Activated naive CD4-positive, alpha-beta T cell treated with anti-CD3 and anti-CD28 coated beads for 36 hours (primary cell): ENCODE measurements at regions of chr17 and their contacts with region 1.

Region 1: DNA sequence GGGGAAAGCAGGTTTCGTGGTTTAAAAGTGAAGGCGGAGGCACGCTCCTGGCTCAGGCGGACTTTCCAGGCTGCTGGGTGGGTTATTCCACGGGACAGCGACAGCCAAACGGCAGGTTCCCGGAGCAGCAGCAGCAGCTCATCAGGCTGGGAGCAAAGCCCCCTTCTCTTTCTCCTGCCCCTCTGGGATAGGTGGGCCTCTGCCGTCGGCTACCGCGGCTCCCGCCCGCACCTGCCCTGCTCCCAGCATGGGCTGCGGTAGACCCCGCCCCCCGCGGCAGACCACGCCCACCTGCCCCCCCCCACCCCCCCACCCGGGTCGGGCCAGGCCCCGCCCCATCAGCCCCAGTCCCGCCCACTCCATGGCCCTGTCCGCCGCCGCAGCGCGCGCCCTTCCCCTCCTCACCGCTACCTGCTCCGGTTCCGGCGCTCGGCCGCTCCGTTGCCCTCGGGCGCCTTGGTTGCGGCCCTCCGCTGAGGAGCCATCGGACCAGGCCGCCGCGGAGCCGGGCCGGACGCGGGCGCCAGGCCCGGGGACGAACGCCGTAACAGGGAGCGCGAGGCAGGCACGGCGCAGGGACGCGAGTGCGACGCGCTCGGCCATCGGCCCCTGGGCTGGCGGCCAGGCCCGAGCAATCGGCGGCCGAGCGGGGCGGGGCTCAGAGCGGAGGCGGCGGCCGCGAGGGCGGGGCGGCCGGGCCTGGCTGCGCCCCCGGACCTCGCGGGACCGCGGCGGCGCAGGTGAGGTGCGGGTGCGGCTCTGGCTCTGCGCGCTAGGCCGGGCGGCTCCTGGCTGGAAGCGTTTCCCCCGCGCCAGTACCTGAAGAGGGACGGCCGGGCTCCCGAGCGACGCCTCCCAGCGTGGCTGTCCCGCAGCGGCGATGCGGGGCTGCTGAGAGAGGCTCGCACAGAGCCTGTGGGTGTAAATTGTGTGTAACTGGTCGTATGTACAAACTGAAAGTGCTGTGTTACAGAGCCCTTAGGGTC is at the starts of genes HEXD and OGFOD3:
- DNase-seq: peak; percentile 80
- H3K4me3 Mint-ChIP-seq: peak within 1 kb of the TSS; percentile 75
- H3K27ac Mint-ChIP-seq: peak within 1 kb of the TSS; percentile 30
- H3K4me1 Mint-ChIP-seq: peaks cover 31% of the 10 kb centered on the region
- H3K27me3 Mint-ChIP-seq: no peaks in the 10 kb centered on the region
- total RNA-seq, gene HEXD: 22.4 to 26.3 TPM
- total RNA-seq, gene OGFOD3: 31.1 to 32.9 TPM

Region 2: DNA sequence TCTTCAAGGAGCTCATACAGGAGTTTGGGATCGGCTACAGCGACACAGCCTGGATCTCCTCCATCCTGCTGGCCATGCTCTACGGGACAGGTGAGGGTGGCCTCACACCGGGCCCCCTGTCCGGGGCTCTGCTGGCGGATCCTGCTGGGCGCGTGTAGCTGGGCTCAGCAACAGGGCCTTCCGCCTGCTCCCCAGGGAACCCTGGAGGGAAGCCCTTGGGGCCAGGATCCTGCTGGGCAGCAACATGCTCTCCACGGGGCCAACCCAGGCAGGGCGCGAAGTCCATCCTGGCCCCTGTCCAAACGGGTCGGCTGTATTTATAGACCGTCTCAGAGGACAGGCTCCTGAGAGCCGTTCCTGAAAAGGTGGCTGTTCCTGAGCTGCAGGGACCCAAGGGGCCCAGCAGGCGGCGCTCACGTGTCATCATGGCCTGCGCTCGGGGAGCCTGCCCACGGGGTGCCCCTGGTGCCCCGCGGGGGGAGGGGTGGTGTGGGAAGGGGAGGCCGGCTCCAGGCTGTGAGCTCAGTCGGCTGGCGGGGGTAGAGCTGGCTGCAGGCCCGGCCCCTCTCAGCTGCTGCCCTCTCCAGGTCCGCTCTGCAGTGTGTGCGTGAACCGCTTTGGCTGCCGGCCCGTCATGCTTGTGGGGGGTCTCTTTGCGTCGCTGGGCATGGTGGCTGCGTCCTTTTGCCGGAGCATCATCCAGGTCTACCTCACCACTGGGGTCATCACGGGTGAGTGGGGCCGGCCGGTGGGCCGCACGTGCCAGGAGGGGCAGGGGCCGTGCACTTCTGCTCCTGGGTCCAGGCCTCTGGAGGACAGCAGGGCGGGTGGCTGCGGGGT is 181.9 kb before region 1 on chr17:
- CTCF ChIA-PET with region 1: interaction called, 5 read pairs
- intact Hi-C with region 1: loop called (anchors 2 kb)
- DNase-seq: peak; percentile 78
- H3K4me3 Mint-ChIP-seq: no peak overlapping the region
- H3K27ac Mint-ChIP-seq: no peak overlapping the region
- H3K4me1 Mint-ChIP-seq: peaks cover 30% of the 10 kb centered on the region
- H3K27me3 Mint-ChIP-seq: no peaks in the 10 kb centered on the region

Region 3: GRCh38 chr17:82351716-82352488 is 66.4 kb before region 1 on chr17:
- CTCF ChIA-PET with region 1: interaction called, 19 read pairs
- intact Hi-C with region 1: loop called (anchors 1 kb)
- DNase-seq: peak; percentile 89
- H3K4me3 Mint-ChIP-seq: no peak overlapping the region
- H3K27ac Mint-ChIP-seq: no peak overlapping the region
- H3K4me1 Mint-ChIP-seq: no peaks in the 10 kb centered on the region
- H3K27me3 Mint-ChIP-seq: no peaks in the 10 kb centered on the region

Region 4: GRCh38 chr17:82457997-82458864 is 39.9 kb after region 1 on chr17 and contains the start of gene NARF:
- CTCF ChIA-PET with region 1: no interaction called
- intact Hi-C with region 1: loop called (anchors 1 kb)
- DNase-seq: peak; percentile 97
- H3K4me3 Mint-ChIP-seq: peak within 1 kb of the TSS; percentile 78
- H3K27ac Mint-ChIP-seq: peak within 1 kb of the TSS; percentile 97
- H3K4me1 Mint-ChIP-seq: peaks cover 27% of the 10 kb centered on the region
- H3K27me3 Mint-ChIP-seq: no peaks in the 10 kb centered on the region
- total RNA-seq, gene NARF: 64.2 to 69.3 TPM

Region 5: DNA sequence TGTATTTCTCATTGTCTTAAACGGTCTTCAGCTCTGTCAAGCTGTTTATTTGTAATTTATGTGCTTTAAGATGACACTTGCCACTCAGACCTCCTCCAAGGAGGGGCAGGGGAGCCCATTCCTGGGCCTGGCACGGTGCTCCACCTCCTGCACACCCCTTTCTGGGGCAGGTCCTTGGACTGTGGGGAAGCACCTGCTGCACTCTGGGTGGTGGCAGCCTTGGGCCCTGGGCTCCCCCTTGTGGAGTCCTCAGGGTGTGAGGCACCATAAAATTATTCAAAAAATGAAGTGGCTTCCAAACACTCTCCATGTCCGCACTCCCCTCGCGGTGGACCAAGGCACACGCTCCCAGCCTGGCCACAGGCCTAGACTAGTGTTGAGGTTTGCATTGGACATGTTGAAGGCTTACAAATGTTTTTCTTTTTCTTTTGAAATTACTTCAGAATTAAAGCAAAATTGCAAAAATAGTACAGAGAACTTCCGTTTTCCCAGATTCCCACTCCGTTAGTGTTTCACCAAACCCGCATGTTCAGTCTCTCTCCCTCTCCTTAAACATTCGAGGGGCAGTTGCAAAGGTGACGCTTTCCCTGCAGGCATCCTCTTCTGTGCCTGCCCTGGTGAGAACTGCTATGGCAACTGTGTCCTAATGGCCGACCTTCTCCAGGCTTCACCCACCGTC is 133.6 kb after region 1 on chr17:
- CTCF ChIA-PET with region 1: interaction called, 4 read pairs
- intact Hi-C with region 1: loop called (anchors 2 kb)
- DNase-seq: peak; percentile 90
- H3K4me3 Mint-ChIP-seq: no peak overlapping the region
- H3K27ac Mint-ChIP-seq: peak overlapping the region; percentile 54
- H3K4me1 Mint-ChIP-seq: peaks cover 32% of the 10 kb centered on the region
- H3K27me3 Mint-ChIP-seq: no peaks in the 10 kb centered on the region

Region 6: GRCh38 chr17:82698065-82698973 is 280.0 kb after region 1 on chr17 and contains the start of gene RAB40B:
- CTCF ChIA-PET with region 1: no interaction called
- intact Hi-C with region 1: loop called (anchors 1 kb)
- DNase-seq: peak; percentile 96
- H3K4me3 Mint-ChIP-seq: peak within 1 kb of the TSS; percentile 75
- H3K27ac Mint-ChIP-seq: no peak within 1 kb of the TSS
- H3K4me1 Mint-ChIP-seq: peaks cover 9% of the 10 kb centered on the region
- H3K27me3 Mint-ChIP-seq: peaks cover 5% of the 10 kb centered on the region
- total RNA-seq, gene RAB40B: 0.42 to 0.52 TPM